Activated CD4-positive, alpha-beta T cell treated with anti-CD3 and anti-CD28 coated beads for 36 hours (primary cell): ENCODE measurements at regions of chr1 and their contacts with region 1.

Region 1: DNA sequence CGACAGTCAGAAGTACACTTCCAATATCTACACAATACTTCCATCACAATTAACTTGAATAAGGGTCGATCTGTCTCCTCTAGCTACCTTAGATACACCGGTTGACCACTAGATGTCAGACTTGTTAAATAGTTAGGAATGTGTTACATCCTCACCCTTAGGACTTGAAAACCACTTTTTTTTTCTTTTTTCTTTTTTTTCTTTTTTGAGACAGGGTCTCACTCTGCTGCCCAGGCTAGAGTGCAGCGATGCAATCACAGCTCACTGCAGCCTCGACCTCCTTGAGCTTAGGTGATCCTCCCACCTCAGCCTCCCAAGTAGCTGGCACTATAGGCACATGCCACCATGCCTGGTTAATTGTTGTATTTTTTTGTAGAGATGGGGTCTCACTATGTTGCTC is 120.4 kb upstream of the GREM2 start:
- DNase-seq: no peak
- ATAC-seq: peak; percentile 69
- H3K4me3 Mint-ChIP-seq: no peak overlapping the region
- H3K27ac Mint-ChIP-seq: no peak overlapping the region
- H3K4me1 Mint-ChIP-seq: no peaks in the 10 kb centered on the region
- H3K27me3 Mint-ChIP-seq: peaks cover 3% of the 10 kb centered on the region

Region 2: DNA sequence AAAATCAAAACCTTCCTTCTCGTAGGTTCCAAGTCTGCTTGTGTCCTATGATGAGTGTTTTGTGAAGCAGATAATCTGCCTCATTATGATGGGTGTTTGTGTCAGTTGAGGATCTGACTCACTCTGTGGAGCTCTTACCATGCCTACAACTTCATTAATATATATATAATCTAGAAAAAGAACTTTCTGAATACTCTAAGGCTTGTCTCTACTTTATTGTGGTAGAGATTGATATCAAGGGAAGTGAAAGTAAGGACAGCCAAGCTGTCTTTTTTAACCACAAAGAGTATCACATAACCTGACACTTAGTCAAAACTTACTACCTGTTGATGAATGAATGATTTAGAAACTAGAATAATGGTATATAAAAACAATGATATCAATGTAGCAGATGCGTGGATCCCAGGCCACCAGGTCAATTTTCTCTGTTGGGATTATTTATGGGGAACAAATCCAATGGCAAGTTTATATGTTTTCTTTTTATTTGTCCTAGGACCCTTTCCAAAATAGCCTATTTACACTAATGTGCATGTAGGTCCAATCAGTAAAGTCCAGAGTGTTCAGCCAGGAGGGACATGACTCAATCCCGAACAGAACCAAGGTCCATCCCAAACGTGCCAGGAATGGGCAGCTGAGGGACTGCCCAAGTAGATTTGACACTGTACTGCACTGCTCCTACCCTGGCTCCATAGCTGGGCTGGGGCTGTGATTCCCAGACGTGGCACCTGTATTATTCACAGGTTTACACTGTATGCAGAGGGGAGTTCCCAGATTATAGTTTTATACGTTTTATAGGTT is 61.9 kb after region 1 on chr1:
- CTCF ChIA-PET with region 1: no interaction called
- POLR2A ChIA-PET with region 1: no interaction called
- intact Hi-C with region 1: no loop called
- DNase-seq: no peak
- ATAC-seq: peak; percentile 88
- H3K4me3 Mint-ChIP-seq: no peak overlapping the region
- H3K27ac Mint-ChIP-seq: no peak overlapping the region
- H3K4me1 Mint-ChIP-seq: no peaks in the 10 kb centered on the region
- H3K27me3 Mint-ChIP-seq: peaks cover 4% of the 10 kb centered on the region

Region 3: DNA sequence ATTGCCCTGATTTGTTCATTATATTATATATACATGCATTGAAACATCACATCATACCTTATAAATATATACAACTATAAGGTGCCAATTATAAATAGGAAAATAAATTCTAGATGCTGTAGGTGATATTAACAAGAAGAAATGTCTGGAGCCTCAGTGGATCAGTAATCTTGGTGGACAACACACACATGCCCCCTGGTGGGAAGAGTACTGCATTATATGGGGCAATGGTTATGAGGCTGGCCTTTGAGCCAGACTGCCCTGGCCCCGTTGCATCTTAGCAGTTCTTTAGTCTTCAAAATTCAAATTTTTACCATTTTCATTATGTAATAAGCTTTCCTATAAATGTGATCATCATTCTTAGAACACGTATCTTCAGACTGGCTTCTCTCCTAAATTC is 214.5 kb after region 1 on chr1:
- CTCF ChIA-PET with region 1: interaction called, 4 read pairs
- POLR2A ChIA-PET with region 1: no interaction called
- intact Hi-C with region 1: loop called in 1 of 2 experiments (anchors 2 kb)
- DNase-seq: peak; percentile 22
- ATAC-seq: no peak
- H3K4me3 Mint-ChIP-seq: no peak overlapping the region
- H3K27ac Mint-ChIP-seq: no peak overlapping the region
- H3K4me1 Mint-ChIP-seq: no peaks in the 10 kb centered on the region
- H3K27me3 Mint-ChIP-seq: no peaks in the 10 kb centered on the region

Region 4: DNA sequence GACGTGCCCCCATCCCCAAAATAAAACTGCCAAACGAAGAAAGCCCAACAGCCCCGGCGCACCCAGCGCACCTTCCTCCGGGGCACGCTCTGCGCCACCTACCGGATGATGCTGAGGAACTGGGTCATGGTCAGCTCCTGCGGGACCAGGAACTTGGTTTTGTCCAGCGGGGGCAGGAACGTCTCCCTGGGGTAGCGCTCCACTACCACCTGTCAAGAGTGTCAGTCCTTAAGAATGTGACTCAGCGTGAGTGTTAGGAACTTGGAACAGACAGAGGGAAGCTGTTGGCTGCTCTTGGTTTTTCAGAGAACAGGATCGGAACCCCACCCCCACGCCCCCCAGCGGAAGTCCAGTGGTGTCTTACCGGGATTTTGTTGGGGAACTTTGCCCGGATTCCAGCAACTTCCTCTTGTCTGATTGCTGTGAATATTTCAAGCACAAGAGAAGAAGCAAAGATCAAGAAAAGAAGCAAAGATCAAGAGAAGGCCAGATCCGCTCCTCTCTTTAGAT is 1266.1 kb after region 1 on chr1:
- CTCF ChIA-PET with region 1: no interaction called
- POLR2A ChIA-PET with region 1: no interaction called
- intact Hi-C with region 1: loop called in 1 of 2 experiments (anchors 5 kb)
- DNase-seq: peak; percentile 74
- ATAC-seq: peak; percentile 78
- H3K4me3 Mint-ChIP-seq: peak overlapping the region; percentile 35
- H3K27ac Mint-ChIP-seq: no peak overlapping the region
- H3K4me1 Mint-ChIP-seq: peaks cover 4% of the 10 kb centered on the region
- H3K27me3 Mint-ChIP-seq: peaks cover 4% of the 10 kb centered on the region